ENCODE measurements at regions of chr14 and their contacts with region 1.

Region 1: DNA sequence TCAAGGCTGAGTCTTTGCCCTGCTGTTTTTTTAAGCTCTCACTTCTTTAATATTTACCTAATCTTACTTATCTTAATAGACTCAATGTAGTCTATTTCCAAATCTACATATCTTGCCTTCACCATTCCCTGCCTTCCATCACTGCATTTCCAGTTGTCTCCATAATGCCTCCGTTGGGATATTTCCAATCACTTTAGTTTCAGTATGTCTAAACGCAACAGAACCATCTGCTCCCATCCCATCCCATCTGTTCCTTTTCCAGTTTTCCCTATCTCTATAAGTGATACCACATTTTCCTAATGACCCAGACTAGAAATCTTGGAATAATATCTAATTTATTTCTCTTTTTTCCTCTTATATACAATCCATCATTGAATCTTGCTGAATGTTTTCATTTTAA is 15.1 kb upstream of the CCDC198 start:
- DNase-seq: no peak
- ATAC-seq: no peak
- H3K4me3 ChIP-seq: no peak overlapping the region
- H3K27ac ChIP-seq: no peak overlapping the region
- H3K4me1 ChIP-seq: no peaks in the 10 kb centered on the region
- H3K27me3 ChIP-seq: no peaks in the 10 kb centered on the region
- CTCF ChIP-seq: no peak
- POLR2A ChIP-seq: no peak
- RAD21 ChIP-seq: no peak

Region 2: DNA sequence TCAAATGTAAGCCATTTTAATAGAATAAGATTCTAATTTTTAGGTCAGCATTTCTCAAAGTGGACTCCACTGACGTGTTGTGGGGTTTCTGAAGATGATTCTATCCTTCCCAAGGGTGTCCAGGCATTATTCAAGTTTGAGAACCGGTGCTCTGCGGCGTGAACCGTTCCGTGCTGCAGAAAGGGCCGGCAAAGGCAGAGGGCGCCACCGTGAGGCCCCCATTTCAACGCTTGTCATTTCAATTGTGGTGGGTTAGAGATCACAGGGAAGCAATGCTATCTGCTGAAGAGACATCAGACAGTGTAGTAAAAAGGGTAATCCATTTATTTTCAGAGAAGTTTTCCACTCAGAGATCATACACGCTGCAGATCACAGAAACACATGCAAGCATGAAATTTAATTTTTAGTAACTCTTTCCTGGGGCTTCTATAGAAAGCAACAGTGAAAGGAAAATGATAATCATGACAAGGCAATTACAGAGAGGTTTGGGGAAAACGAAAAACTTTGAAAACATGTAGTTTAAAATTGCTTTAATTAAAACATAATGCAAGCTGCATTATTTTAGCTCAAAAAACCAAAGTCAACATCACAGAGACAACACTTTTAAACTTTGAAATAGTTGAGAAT is 441.8 kb before region 1 on chr14:
- CTCF ChIA-PET with region 1: no interaction called
- POLR2A ChIA-PET with region 1: no interaction called
- dilution Hi-C with region 1: no loop called
- in situ Hi-C with region 1: no loop called
- intact Hi-C with region 1: no loop called
- DNase-seq: peak; percentile 2
- ATAC-seq: peak; percentile 60
- H3K4me3 ChIP-seq: no peak overlapping the region
- H3K27ac ChIP-seq: no peak overlapping the region
- H3K4me1 ChIP-seq: no peaks in the 10 kb centered on the region
- H3K27me3 ChIP-seq: peaks cover 1% of the 10 kb centered on the region; the same call in 1 of the 2 replicates
- CTCF ChIP-seq: peak; percentile 44
- POLR2A ChIP-seq: no peak
- RAD21 ChIP-seq: peak; percentile 51

Region 3: GRCh38 chr14:58177125-58177524 is 668.4 kb after region 1 on chr14:
- CTCF ChIA-PET with region 1: no interaction called
- POLR2A ChIA-PET with region 1: no interaction called
- dilution Hi-C with region 1: no loop called
- in situ Hi-C with region 1: no loop called
- intact Hi-C with region 1: loop called (anchors 5 kb)
- DNase-seq: no peak
- ATAC-seq: no peak
- H3K4me3 ChIP-seq: no peak overlapping the region
- H3K27ac ChIP-seq: no peak overlapping the region
- H3K4me1 ChIP-seq: no peaks in the 10 kb centered on the region
- H3K27me3 ChIP-seq: no peaks in the 10 kb centered on the region; the same call in 1 of the 2 replicates
- CTCF ChIP-seq: no peak
- POLR2A ChIP-seq: no peak
- RAD21 ChIP-seq: no peak